Activated CD4-positive, alpha-beta T cell treated with anti-CD3 and anti-CD28 coated beads for 36 hours (primary cell): ENCODE measurements at regions of chrX and their contacts with region 1.

Region 1: DNA sequence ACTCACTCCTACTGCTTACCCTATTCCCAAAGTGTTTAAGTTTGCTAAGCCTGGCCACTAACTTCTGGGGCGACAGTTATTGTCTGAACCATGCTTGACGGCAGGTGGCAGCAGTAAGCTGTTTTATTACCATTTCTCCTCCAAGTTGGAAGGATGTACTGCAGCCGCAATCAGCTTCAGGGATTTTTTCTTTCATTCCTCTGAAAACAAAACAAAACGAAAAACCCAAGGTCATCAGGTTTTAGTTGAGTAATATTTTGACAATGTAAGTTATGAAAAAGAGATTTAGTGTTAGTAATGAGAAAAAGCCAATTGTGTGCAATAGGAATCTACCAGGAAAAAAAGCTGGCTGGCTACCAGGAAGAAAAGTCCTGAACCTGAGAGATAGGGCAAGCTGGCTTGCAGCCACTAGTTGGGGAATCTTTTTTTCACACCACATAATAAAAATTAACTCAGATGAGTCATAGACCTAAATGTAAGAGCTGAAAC is 13.2 kb upstream of the RAB9B start:
- DNase-seq: peak; percentile 67
- ATAC-seq: peak; percentile 76
- H3K4me3 Mint-ChIP-seq: no peak overlapping the region
- H3K27ac Mint-ChIP-seq: no peak overlapping the region
- H3K4me1 Mint-ChIP-seq: peaks cover 2% of the 10 kb centered on the region
- H3K27me3 Mint-ChIP-seq: peaks cover 2% of the 10 kb centered on the region

Region 2: GRCh38 chrX:103686199-103687072 is 158.8 kb before region 1 on chrX and contains the start of gene MORF4L2:
- CTCF ChIA-PET with region 1: no interaction called
- POLR2A ChIA-PET with region 1: no interaction called
- intact Hi-C with region 1: no loop called
- DNase-seq: peak; percentile 91
- ATAC-seq: peak; percentile 91
- H3K4me3 Mint-ChIP-seq: no peak within 1 kb of the TSS
- H3K27ac Mint-ChIP-seq: peak within 1 kb of the TSS; percentile 94
- H3K4me1 Mint-ChIP-seq: peaks cover 9% of the 10 kb centered on the region
- H3K27me3 Mint-ChIP-seq: no peaks in the 10 kb centered on the region
- total RNA-seq, gene MORF4L2: 239 to 257 TPM

Region 3: DNA sequence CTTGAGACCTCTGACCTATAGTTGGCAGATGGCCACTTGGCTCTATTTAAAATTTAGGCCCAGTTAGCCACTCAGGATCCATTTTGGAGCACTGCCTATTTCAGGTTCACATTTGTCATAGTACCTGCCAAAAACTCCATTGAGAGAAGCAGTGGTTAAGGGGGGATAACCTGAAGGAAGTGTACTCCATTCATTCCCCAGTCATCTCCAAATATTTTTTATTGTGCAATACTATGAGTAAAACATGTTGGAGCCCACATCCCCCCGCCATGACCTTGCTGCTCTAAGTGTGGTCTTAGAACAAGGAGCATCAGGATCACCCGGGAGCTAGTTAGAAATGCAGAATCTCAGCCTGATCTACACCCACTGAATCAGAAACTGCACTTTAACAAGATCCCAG is 47.5 kb before region 1 on chrX:
- CTCF ChIA-PET with region 1: no interaction called
- POLR2A ChIA-PET with region 1: no interaction called
- intact Hi-C with region 1: no loop called
- DNase-seq: no peak
- ATAC-seq: no peak
- H3K4me3 Mint-ChIP-seq: no peak overlapping the region
- H3K27ac Mint-ChIP-seq: no peak overlapping the region
- H3K4me1 Mint-ChIP-seq: peaks cover 11% of the 10 kb centered on the region
- H3K27me3 Mint-ChIP-seq: peaks cover 7% of the 10 kb centered on the region

Region 4: GRCh38 chrX:103831803-103832544 is 13.2 kb before region 1 on chrX and contains the start of gene RAB9B:
- CTCF ChIA-PET with region 1: interaction called, 13 read pairs
- POLR2A ChIA-PET with region 1: no interaction called
- intact Hi-C with region 1: no loop called
- DNase-seq: peak; percentile 31
- ATAC-seq: peak; percentile 98
- H3K4me3 Mint-ChIP-seq: peak within 1 kb of the TSS; percentile 71
- H3K27ac Mint-ChIP-seq: peak within 1 kb of the TSS; percentile 72
- H3K4me1 Mint-ChIP-seq: peaks cover 6% of the 10 kb centered on the region
- H3K27me3 Mint-ChIP-seq: no peaks in the 10 kb centered on the region
- total RNA-seq, gene RAB9B: 0.37 to 0.48 TPM

Region 5: DNA sequence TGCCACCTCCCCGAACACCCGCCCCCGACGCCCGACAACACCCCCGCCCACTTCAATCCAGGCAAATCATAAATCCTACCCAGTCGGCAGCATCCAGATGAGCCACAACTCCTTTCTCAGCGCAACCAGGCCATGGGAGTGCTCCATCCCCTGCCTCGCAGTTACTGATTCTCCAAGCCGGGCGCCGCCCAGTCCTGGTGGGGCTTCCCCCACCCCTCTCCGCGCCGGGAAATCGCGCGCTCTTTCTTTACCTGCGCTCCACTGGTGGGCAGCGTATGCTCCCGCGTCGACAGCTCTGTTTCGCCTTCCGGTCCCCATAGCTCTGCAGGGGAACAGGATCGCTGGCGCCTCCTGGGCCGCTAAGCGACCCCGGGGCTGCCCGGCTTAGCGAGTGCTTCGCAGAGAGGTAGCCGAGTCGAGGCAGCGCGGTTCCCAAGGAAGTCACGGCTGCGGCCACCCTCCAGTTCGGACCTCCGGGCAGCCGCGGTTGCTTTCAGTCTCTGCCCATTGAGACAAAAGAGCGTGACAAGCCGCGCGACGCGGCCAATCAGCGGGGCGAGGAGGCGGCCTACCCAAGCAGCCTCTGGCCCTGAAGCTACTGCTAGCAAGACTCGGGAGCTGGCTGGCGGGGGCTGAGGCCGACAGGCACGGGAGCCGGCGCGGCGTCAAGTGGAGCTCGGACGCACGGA is 73.5 kb after region 1 on chrX:
- CTCF ChIA-PET with region 1: interaction called, 8 read pairs
- POLR2A ChIA-PET with region 1: interaction called, 3 read pairs
- intact Hi-C with region 1: loop called in 1 of 2 experiments (anchors 2 kb)
- DNase-seq: peak; percentile 82
- ATAC-seq: peak; percentile 89
- H3K4me3 Mint-ChIP-seq: peak overlapping the region; percentile 90
- H3K27ac Mint-ChIP-seq: peak overlapping the region; percentile 94
- H3K4me1 Mint-ChIP-seq: peaks cover 15% of the 10 kb centered on the region
- H3K27me3 Mint-ChIP-seq: no peaks in the 10 kb centered on the region

Region 6: DNA sequence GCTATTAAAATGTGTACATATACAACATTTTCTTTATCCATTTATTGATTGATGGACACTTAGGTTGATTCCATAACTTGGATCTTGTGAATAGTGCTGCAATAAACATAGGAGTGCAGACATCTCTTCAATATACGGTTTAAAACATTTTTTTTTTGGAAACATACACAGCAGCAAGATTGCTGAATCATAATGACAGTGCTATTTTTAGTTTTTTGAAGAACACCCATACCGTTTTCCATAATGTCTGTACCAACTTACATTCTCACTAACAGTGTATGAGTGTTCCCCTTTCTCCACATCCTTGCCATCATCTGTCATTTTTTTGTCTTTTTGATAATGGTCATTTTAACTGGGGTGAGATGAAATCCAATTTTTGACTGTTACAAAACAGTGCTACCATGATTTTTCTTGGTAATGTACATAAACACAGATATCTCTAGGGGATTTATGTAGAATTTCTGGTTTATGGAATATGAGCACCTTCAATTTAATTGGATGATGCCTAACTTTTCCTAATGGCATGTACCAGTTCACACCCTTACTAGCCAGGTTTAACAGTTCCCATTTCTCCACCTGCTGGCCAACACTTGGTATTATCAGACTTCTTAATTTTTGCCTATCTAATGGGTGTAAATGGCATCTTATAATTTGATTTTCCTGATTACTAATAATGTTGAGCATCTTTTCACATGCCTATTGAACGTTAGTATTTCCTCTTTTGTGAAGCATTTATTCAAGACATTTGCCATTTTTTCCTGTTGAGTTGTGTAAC is 96.2 kb after region 1 on chrX:
- CTCF ChIA-PET with region 1: interaction called, 5 read pairs
- POLR2A ChIA-PET with region 1: no interaction called
- intact Hi-C with region 1: loop called (anchors 1 kb)
- DNase-seq: no peak
- ATAC-seq: peak; percentile 49
- H3K4me3 Mint-ChIP-seq: no peak overlapping the region
- H3K27ac Mint-ChIP-seq: no peak overlapping the region
- H3K4me1 Mint-ChIP-seq: peaks cover 34% of the 10 kb centered on the region
- H3K27me3 Mint-ChIP-seq: no peaks in the 10 kb centered on the region

Region 7: DNA sequence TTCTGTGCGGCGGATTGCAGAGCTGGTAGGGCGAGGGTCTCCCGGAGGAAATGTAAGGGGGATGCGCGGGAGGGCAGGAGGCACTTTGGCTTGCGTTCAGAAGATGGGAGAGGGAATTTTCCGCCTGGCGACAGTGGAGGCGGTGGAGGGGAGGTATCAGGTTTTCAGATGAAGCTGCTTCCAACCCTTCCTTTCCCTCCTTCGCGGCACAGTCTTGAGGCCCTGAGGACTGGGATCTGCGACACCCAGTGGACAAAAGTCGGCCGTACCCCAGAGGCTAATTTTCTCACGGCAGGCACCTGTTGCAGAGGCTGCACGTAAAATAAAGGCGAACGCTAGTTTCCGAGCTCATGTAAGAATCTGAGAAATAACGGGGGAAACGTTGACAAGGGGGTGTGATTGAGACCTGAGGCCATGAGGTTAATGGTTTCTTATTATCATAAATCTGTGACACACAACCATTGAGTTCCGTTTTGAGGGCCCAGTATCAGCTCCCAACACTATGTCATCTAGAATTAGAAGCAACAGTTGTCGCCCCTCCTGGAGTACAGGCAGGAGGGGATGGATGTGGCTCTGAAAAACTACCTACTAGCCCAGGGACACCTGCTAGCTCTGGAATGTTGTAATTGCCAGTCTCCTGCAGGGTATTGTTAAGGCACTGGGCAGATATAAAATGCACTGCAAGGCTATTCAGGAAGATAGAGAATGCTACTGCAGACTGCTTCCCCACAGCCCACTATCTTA is 268.2 kb after region 1 on chrX:
- CTCF ChIA-PET with region 1: interaction called, 6 read pairs
- POLR2A ChIA-PET with region 1: no interaction called
- intact Hi-C with region 1: loop called (anchors 1 kb)
- DNase-seq: peak; percentile 70
- ATAC-seq: peak; percentile 73
- H3K4me3 Mint-ChIP-seq: peak overlapping the region; percentile 74
- H3K27ac Mint-ChIP-seq: peak overlapping the region; percentile 65
- H3K4me1 Mint-ChIP-seq: peaks cover 36% of the 10 kb centered on the region
- H3K27me3 Mint-ChIP-seq: no peaks in the 10 kb centered on the region

Region 8: DNA sequence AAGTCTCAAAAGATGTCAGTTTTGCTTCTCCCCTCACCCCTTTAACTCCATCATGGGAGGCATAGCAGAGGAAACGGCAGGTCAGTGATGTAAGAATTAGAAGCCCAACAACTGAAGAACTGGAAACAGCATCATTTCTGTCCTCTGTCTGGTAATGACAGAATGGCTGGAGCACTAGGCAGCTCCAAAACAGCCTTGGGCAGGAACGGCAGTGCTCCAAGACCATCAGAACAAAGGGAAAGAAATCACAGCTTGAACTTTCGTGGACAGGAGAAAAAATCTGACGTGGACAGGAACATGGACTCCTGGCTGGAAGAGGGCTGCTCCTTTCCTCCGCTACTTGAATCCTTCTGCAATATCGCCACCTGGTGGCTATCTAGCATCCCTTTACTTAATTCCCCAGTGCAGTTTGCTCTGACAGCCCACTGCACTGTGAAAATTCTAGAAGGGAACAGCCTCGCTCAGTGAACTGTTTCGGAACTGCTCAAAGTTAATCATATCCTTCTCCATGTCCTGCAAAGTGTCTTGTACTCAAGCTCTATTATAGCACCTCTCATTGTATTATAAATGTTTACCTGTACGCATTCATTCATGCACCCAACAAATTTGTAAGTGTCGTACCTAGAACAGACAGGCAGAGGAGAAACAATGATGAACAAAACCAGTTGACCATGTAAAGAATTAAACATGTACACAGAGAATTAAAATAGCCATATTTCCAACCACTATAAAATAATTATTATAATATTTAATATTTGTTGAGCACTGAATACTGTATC is 291.2 kb after region 1 on chrX:
- CTCF ChIA-PET with region 1: interaction called, 9 read pairs
- POLR2A ChIA-PET with region 1: no interaction called
- intact Hi-C with region 1: loop called (anchors 1 to 2 kb)
- DNase-seq: peak; percentile 64
- ATAC-seq: peak; percentile 70
- H3K4me3 Mint-ChIP-seq: no peak overlapping the region
- H3K27ac Mint-ChIP-seq: no peak overlapping the region
- H3K4me1 Mint-ChIP-seq: peaks cover 21% of the 10 kb centered on the region
- H3K27me3 Mint-ChIP-seq: no peaks in the 10 kb centered on the region

Region 9: GRCh38 chrX:104270920-104271512 is 425.8 kb after region 1 on chrX:
- CTCF ChIA-PET with region 1: no interaction called
- POLR2A ChIA-PET with region 1: no interaction called
- intact Hi-C with region 1: loop called in 1 of 2 experiments (anchors 2 kb)
- DNase-seq: peak; percentile 59
- ATAC-seq: no peak
- H3K4me3 Mint-ChIP-seq: peak overlapping the region; percentile 40
- H3K27ac Mint-ChIP-seq: no peak overlapping the region
- H3K4me1 Mint-ChIP-seq: peaks cover 5% of the 10 kb centered on the region
- H3K27me3 Mint-ChIP-seq: peaks cover 12% of the 10 kb centered on the region